K562 (cell line): ENCODE measurements at regions of chr21 and their contacts with region 1.

Region 1: GRCh38 chr21:39788383-39788782 is 43.4 kb downstream of the IGSF5 start:
- DNase-seq: peak; percentile 28 to 75 (median 51)
- ATAC-seq: peak; percentile 99
- H3K4me3 ChIP-seq: no peak overlapping the region
- H3K27ac ChIP-seq: no peak overlapping the region
- H3K4me1 ChIP-seq: no peaks in the 10 kb centered on the region
- H3K27me3 ChIP-seq: no peaks in the 10 kb centered on the region
- CTCF ChIP-seq: peak; percentile 89 to 97 (median 95)
- EP300 ChIP-seq: no peak
- POLR2A ChIP-seq: no peak
- RAD21 ChIP-seq: peak; percentile 92 to 95

Region 2: GRCh38 chr21:39867198-39867650 is 78.8 kb after region 1 on chr21 and contains the start of gene PCP4:
- CTCF ChIA-PET with region 1: no interaction called
- POLR2A ChIA-PET with region 1: no interaction called
- in situ Hi-C with region 1: no loop called
- intact Hi-C with region 1: loop called (anchors 1 kb)
- DNase-seq: peak; percentile 64 to 74 (median 70)
- ATAC-seq: peak; percentile 94
- H3K4me3 ChIP-seq: no peak within 1 kb of the TSS
- H3K27ac ChIP-seq: no peak within 1 kb of the TSS
- H3K4me1 ChIP-seq: no peaks in the 10 kb centered on the region
- H3K27me3 ChIP-seq: peaks cover 2 to 4% of the 10 kb centered on the region in 2 experiments; a peak in 1 of 5 replicates
- CTCF ChIP-seq: peak; percentile 79 to 94 (median 88)
- EP300 ChIP-seq: no peak
- POLR2A ChIP-seq: no peak
- RAD21 ChIP-seq: peak in 1 of 2 experiments; percentile 74; a peak in 2 of 4 replicates
- polyA plus RNA-seq, gene PCP4: not detected

Region 3: DNA sequence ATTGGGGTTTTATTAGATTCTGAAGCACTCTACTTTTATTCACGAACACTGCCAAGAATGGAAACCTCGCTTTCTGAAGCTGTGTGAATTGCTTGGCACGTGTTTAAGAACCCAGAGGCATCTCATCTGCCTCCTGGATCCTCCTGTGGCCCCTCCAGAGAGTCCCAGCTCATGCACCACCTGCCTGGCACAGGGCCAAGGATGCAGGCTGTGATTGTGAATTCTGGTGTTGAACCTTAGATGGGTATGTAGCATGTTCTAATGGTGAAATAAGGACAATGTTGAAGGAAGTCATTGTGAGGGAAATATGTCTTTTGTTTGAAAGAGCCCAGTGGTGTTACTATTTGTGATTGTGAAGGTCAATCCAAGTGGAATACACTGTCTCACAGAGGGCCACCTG is 105.0 kb after region 1 on chr21:
- CTCF ChIA-PET with region 1: no interaction called
- POLR2A ChIA-PET with region 1: no interaction called
- in situ Hi-C with region 1: no loop called
- intact Hi-C with region 1: loop called (anchors 10 kb)
- DNase-seq: no peak
- ATAC-seq: no peak
- H3K4me3 ChIP-seq: no peak overlapping the region
- H3K27ac ChIP-seq: no peak overlapping the region
- H3K4me1 ChIP-seq: no peaks in the 10 kb centered on the region
- H3K27me3 ChIP-seq: no peaks in the 10 kb centered on the region; a peak in 1 of 5 replicates
- CTCF ChIP-seq: no peak
- EP300 ChIP-seq: no peak
- POLR2A ChIP-seq: no peak
- RAD21 ChIP-seq: no peak